PC-3 (cell line): ENCODE measurements at regions of chr11 and their contacts with region 1.

Region 1: DNA sequence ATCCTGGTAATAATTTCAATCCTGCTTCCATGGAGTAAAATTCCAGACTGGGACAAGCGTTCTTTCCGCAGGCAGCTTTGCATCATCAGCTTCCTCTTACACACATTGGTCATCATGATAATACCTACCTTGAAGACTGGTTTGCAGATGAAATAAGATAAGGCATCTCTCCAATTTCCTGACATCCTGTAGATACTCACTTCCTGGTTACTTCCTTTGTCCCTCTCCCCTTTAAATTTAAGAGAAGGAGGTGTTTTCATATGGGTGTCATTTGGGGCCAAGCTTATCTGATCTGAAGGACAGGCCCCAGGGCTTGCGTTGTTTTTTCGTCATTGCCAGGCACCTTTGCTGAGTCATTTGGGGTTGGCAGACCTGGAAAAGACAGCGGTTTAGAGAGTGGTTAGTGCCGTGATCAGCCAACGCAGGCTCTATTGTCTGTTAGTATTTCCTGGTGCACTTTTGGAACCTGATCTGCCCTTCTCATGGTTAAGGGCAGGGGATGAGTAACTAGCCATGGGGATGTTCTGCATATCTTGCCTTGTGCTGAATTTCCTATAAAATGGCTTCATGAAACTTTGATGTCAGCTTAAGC is 24.1 kb downstream of the GRAMD1B start:
- DNase-seq: peak; percentile 99
- ATAC-seq: peak; percentile 80
- H3K4me3 ChIP-seq: peak overlapping the region; percentile 47
- H3K27ac ChIP-seq: peak overlapping the region; percentile 98
- H3K4me1 ChIP-seq: peaks cover 73% of the 10 kb centered on the region
- H3K27me3 ChIP-seq: no peaks in the 10 kb centered on the region
- CTCF ChIP-seq: no peak

Region 2: GRCh38 chr11:123235117-123235655 is 219.0 kb before region 1 on chr11:
- CTCF ChIA-PET with region 1: no interaction called
- POLR2A ChIA-PET with region 1: no interaction called
- intact Hi-C with region 1: no loop called
- DNase-seq: peak; percentile 50
- ATAC-seq: no peak
- H3K4me3 ChIP-seq: no peak overlapping the region
- H3K27ac ChIP-seq: no peak overlapping the region
- H3K4me1 ChIP-seq: peaks cover 6% of the 10 kb centered on the region; the same call in 1 of the 2 replicates
- H3K27me3 ChIP-seq: no peaks in the 10 kb centered on the region
- CTCF ChIP-seq: peak; percentile 83

Region 3: GRCh38 chr11:123316003-123316402 is 138.2 kb before region 1 on chr11:
- CTCF ChIA-PET with region 1: no interaction called
- POLR2A ChIA-PET with region 1: no interaction called
- intact Hi-C with region 1: no loop called
- DNase-seq: no peak
- ATAC-seq: no peak
- H3K4me3 ChIP-seq: no peak overlapping the region
- H3K27ac ChIP-seq: no peak overlapping the region
- H3K4me1 ChIP-seq: no peaks in the 10 kb centered on the region
- H3K27me3 ChIP-seq: peaks cover 35% of the 10 kb centered on the region; the same call in 1 of the 2 replicates
- CTCF ChIP-seq: no peak

Region 4: DNA sequence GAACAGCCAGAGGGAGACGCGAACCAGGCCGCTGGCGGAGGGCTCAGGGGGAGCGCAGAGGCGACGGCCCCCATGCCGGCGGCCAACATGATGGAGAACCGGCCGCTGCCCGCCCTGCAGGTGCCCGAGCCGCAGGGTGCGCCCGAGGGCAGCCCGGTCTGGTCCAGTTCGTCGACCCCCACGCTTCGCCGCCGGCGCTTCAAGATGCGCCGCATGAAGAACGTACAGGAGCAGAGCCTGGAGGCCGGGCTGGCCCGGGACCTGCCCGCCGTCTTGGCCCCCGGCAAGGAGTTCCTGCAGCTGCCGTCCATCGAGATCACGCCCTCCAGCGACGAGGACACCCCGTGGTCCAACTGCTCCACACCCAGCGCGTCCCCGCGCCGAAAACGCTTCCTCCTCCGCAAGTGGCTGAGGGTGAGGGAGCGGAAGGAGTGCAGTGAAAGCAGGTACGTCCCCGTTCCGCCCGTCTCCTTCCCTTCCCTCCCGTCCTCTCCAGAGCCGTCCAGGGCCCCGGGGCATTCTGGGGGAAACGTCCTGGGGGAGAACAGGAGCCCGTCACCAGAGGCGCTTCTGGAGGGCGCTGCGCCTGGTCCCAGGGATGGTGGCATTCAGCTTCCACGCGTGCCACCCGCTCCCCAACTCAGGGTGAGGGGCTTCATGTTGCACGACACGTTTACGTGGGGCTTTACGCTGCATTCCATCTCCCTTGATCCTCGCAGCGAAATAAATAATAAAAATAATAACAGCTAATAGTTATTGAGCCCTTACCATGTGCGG is 23.2 kb before region 1 on chr11:
- CTCF ChIA-PET with region 1: no interaction called
- POLR2A ChIA-PET with region 1: interaction called, 12 read pairs
- intact Hi-C with region 1: loop called (anchors 1 kb)
- DNase-seq: peak; percentile 72
- ATAC-seq: peak; percentile 36
- H3K4me3 ChIP-seq: peak overlapping the region; percentile 88
- H3K27ac ChIP-seq: peak overlapping the region; percentile 91
- H3K4me1 ChIP-seq: peaks cover 48% of the 10 kb centered on the region
- H3K27me3 ChIP-seq: no peaks in the 10 kb centered on the region
- CTCF ChIP-seq: no peak; the same call in 1 of the 2 replicates